AG04449 (cell line): ENCODE measurements at regions of chr6 and their contacts with region 1.

Region 1: DNA sequence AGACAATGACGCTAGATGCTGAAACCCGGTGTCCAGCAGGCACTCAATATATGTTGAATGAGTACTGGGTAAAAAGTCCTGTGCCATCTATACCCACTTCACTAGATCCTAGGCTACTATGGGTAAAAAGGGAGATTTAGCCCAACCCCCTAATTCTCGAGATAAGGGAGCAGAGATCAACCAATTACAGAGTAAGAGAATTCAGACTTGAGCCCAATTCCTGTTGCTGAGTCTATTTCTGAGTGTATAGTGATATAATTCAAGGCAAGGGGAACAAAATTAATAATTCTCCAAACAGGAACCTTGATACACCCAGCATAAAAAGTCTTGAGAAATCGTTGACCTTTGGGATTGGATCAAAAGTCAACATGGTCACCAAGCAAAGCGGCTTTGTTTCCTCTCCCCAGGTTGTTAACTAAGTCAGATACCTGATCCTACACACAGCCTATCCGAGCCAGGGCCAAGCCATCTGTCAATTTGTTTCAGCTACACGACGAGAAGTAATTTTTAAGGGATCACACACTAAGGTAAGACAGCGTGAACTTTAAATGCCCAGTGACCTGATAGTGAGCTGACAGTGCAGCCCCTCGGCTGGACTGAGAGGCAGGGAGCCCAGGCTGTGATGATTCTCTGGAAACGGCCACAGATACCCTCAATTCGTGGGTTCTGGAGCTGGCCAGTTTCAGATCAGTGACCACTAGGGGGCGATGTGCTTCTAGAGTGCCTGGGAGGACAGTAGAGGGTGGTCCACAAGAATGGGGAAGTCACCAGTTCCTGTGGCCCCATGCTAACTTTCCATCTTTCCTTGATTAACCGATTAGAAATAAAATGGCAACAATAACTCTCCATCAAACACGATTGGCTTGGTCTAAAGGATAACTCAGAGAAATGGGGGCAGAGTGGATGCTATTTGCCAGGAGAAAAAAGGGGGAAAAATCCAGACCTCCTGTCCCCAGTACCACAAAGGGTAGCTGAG is 46.2 kb downstream of the SLC22A23 start:
- DNase-seq: no peak
- H3K4me3 ChIP-seq: no peak overlapping the region
- CTCF ChIP-seq: peak; percentile 72

Region 2: GRCh38 chr6:3390698-3391097 is 20.0 kb before region 1 on chr6:
- CTCF ChIA-PET with region 1: interaction called, 14 read pairs
- POLR2A ChIA-PET with region 1: no interaction called
- DNase-seq: peak; percentile 89
- H3K4me3 ChIP-seq: no peak overlapping the region
- CTCF ChIP-seq: no peak

Region 3: GRCh38 chr6:3427687-3428085 is 17.0 kb after region 1 on chr6:
- CTCF ChIA-PET with region 1: interaction called, 24 read pairs
- POLR2A ChIA-PET with region 1: no interaction called
- DNase-seq: no peak
- H3K4me3 ChIP-seq: no peak overlapping the region
- CTCF ChIP-seq: no peak

Region 4: GRCh38 chr6:3442431-3443220 is 32.0 kb after region 1 on chr6:
- CTCF ChIA-PET with region 1: interaction called, 13 read pairs
- POLR2A ChIA-PET with region 1: no interaction called
- DNase-seq: peak; percentile 21
- H3K4me3 ChIP-seq: no peak overlapping the region
- CTCF ChIP-seq: no peak